ENCODE measurements at regions of chr9 and their contacts with region 1.

Region 1: DNA sequence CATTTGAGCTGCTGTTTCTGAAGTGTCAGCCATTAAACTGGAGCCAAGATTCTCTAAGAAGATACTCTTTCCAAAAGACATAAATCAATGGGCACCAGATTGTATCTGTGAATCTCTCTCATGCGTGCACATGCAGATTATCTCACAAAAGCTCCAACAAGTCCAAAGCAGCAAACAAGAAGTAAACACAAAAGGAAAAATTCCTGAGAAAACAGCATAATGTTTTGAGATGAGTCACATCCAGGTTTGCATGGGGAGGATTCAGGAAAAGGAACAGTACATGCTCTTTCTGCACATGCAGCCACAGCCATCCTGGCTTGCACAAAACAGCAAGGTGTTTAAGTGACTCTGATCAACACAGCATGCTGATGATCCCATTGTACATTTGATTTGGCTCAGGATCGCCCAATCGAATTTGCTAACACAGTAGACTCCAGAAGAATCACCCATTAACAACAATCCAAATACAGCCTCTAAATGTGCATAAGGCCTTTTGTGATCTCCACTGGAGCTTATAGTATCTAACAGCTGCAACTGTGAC is 143.1 kb downstream of the ELAVL2 start:
- DNase-seq: peak in 1 of 10 donors; percentile 40
- H3K4me3 ChIP-seq: peak overlapping the region in 1 of 59 donors; percentile 7
- H3K27ac ChIP-seq: peak overlapping the region in 42 of 59 donors; percentile 8 to 81 (median 62)
- H3K27me3 ChIP-seq: no peaks in the 10 kb centered on the region
- CTCF ChIP-seq: no peak

Region 2: DNA sequence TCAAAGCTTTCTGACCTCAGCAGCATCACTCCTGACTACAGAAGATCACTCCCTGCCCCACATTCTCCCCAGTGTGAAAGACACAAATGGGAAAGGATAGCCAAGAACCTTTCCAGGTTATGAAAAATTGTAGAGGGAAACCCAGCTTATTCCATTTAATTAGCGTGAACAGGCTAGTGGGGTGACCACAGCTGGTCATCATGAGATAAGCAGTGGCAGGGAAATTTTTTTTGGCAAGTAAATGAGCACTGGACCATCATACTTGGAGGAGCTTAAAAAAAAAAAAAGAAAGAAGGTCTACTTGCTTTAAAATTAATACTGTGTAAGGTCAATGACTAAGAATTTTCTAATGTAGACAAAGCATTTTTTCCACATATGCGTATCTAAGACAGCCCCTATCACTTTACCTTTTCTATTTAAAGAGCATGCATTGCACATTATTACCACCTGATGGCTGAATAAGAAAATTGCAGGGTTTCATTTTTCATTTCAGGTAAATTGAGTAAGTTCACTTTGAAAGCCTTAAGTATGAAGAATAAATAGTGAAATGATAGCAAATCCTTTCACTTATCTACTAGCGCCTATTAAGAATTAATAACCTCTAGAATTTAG is 19.5 kb after region 1 on chr9:
- intact Hi-C with region 1: loop called in 1 of 2 experiments (anchors 1 kb)
- DNase-seq: no peak
- H3K4me3 ChIP-seq: no peak overlapping the region
- H3K27ac ChIP-seq: peak overlapping the region in 6 of 59 donors; percentile 4 to 68 (median 24)
- H3K27me3 ChIP-seq: no peaks in the 10 kb centered on the region
- CTCF ChIP-seq: no peak

Region 3: GRCh38 chr9:23790351-23791260 is 107.6 kb after region 1 on chr9:
- intact Hi-C with region 1: no loop called
- DNase-seq: no peak
- H3K4me3 ChIP-seq: no peak overlapping the region
- H3K27ac ChIP-seq: no peak overlapping the region
- H3K27me3 ChIP-seq: no peaks in the 10 kb centered on the region
- CTCF ChIP-seq: no peak

Region 4: GRCh38 chr9:23826120-23826629 is 143.2 kb after region 1 on chr9 and contains the start of gene ELAVL2:
- intact Hi-C with region 1: loop called in 1 of 2 experiments (anchors 10 kb)
- DNase-seq: peak; percentile 86 to 100 (median 96)
- H3K4me3 ChIP-seq: peak within 1 kb of the TSS; percentile 39 to 76 (median 62)
- H3K27ac ChIP-seq: peak within 1 kb of the TSS in 43 of 59 donors; percentile 0 to 78 (median 55)
- H3K27me3 ChIP-seq: peaks cover 0 to 92% (median 51%) of the 10 kb centered on the region in 45 donors
- CTCF ChIP-seq: peak in 1 of 56 donors; percentile 17
- total RNA-seq, gene ELAVL2: 26.6 to 136 (median 93.2) TPM

Region 5: DNA sequence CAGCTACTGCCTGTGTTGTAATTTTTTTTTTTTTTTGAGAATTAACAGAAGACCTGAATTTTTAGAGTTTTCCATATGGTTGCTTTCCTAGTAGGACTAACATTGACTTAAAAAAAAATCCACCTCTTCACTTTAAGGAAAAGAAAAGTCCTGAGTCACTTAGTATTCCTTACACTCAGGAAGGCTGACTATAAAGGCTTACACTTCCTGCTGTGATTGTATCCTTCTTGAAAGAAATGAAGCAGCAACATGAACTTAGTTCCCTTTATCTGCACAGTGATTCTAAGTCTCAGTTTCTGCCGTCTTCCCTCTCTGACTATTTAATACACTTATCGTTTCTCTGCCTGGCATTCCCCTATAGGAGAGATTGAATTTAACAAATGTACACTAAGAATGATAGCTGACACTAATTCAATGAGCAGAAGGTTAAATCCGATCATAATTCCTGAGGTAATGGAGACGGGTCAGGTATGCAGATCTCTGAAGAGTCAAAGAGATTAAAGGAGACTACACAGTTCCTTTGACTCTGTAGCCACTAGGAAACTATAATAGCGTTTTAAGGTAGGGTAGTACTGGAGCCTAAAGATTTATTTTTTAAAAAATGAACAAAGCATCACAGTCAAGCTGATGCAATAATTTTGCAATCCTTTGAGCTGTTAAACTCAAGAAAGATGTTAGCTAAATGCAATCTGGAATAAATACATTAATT is 328.2 kb after region 1 on chr9:
- intact Hi-C with region 1: no loop called
- DNase-seq: no peak
- H3K4me3 ChIP-seq: no peak overlapping the region
- H3K27ac ChIP-seq: no peak overlapping the region
- H3K27me3 ChIP-seq: no peaks in the 10 kb centered on the region
- CTCF ChIP-seq: no peak

Measured in dorsolateral prefrontal cortex (tissue), 120 donors.